Panc1 (cell line): ENCODE measurements at regions of chr22 and their contacts with region 1.

Region 1: DNA sequence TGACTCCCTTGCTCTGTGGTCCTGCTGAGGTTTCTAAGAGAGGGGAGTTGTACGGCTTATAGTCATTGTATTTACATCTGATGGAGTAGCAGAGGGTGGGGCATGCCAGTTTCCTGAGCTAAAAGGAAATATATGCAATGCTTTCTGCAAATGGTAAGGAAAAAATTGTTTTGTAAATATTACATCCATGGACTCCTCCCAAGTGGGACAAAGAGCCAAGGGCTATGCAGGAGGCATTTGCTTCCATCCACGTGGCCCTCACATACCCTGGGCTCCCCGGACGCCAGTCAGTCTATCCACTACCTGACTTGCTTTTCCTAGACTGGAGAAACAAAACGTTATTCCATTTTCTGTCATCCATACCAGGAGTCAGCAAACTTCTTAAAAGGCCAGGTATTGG is 59.7 kb upstream of the PITPNB start:
- DNase-seq: no peak
- ATAC-seq: no peak
- H3K4me3 ChIP-seq: no peak overlapping the region
- H3K27ac ChIP-seq: no peak overlapping the region
- H3K4me1 ChIP-seq: no peaks in the 10 kb centered on the region
- H3K27me3 ChIP-seq: no peaks in the 10 kb centered on the region
- CTCF ChIP-seq: no peak

Region 2: DNA sequence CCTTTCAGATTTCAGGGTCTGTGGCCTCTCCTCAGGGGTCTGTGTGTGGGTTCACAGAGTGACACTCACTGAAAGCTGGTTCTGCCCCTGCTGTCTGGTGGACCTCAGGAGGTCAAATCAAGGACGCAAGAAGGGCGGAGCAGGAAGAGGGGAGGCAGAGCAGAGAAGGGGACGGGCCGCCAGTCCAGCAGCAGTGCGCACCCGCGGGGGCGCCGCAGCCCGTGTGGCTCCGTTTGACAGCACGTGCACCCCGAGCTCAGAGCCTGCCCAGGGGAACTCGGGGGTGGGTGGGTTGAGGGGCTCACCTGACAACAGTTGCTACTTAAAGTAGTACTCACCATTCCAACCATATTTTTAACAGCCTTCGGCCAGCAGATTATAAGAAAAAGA is 11.6 kb after region 1 on chr22:
- CTCF ChIA-PET with region 1: no interaction called
- POLR2A ChIA-PET with region 1: interaction called, 13 read pairs
- in situ Hi-C with region 1: no loop called
- intact Hi-C with region 1: no loop called
- DNase-seq: no peak
- ATAC-seq: no peak
- H3K4me3 ChIP-seq: no peak overlapping the region
- H3K27ac ChIP-seq: no peak overlapping the region
- H3K4me1 ChIP-seq: no peaks in the 10 kb centered on the region
- H3K27me3 ChIP-seq: no peaks in the 10 kb centered on the region
- CTCF ChIP-seq: no peak